ENCODE measurements at regions of chr11 and their contacts with region 1.

Region 1: GRCh38 chr11:47578524-47579460 is at the starts of genes KBTBD4 and NDUFS3:
- DNase-seq: peak; percentile 90
- ATAC-seq: peak; percentile 95
- H3K4me3 Mint-ChIP-seq: peak within 1 kb of the TSS; percentile 92
- H3K27ac Mint-ChIP-seq: peak within 1 kb of the TSS; percentile 98
- H3K4me1 Mint-ChIP-seq: peaks cover 34% of the 10 kb centered on the region
- H3K27me3 Mint-ChIP-seq: no peaks in the 10 kb centered on the region
- CTCF ChIP-seq: no peak
- total RNA-seq, gene KBTBD4: 15.4 to 16.3 TPM
- total RNA-seq, gene NDUFS3: 129 to 138 TPM

Region 2: GRCh38 chr11:47565340-47566148 is 13.2 kb before region 1 on chr11 and contains the start of gene PTPMT1:
- CTCF ChIA-PET with region 1: interaction called, 7 read pairs
- POLR2A ChIA-PET with region 1: interaction called, 48 read pairs
- intact Hi-C with region 1: no loop called
- DNase-seq: peak; percentile 82
- ATAC-seq: peak; percentile 88
- H3K4me3 Mint-ChIP-seq: peak within 1 kb of the TSS; percentile 83
- H3K27ac Mint-ChIP-seq: peak within 1 kb of the TSS; percentile 83
- H3K4me1 Mint-ChIP-seq: peaks cover 28% of the 10 kb centered on the region
- H3K27me3 Mint-ChIP-seq: no peaks in the 10 kb centered on the region
- CTCF ChIP-seq: no peak
- total RNA-seq, gene PTPMT1: 44.1 to 46.7 TPM

Measured in activated CD8-positive, alpha-beta T cell treated with anti-CD3 and anti-CD28 coated beads for 36 hours (primary cell).